ENCODE measurements at regions of chr14 and their contacts with region 1.

Region 1: DNA sequence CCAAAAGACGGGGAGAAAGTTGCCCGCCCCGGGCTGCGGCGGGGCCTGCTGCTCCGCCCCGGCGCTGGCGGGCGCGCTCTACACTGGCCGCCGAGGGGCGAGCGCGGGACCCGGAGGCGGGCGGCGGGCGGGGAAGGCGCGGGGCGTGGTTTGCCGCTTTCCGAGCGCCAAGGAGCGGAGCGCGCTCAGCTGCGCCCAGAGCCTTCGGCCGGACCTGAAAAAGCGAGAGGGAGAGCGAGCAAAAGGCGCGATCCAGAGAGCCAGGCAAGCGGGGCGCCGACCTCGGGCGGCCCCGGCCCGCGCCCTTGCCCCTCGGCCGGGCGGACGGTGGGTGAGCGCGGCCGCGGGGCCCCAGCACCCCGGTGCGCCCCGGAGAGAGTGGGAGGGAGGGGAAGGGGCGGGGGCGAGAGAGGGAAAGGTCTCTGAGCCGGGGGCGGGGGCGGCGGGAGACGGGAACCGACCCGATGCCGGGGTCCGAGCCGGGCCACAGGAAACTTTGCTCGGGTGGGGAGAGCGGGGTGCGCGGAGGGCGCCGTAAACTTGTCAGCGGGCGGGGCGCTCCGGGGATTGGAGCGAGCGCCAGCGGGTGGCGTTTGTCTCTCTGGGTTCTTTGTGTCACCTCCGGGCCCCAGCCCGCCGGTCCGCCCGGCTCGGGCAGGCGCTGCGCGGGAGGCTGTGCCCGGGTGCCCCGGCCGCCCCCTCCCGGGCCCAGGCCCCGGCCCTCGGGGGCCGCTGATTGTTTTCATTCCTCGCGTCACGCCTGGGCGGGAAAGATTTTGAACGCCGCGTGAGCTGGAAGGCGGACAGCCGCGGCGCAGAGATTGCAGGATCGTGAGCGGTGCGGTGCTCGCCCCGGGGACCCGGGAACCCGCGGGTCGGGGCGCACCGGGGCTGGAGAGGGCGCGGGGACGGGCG is at the start of gene SYNE2:
- DNase-seq: peak; percentile 84
- H3K4me3 Mint-ChIP-seq: peak within 1 kb of the TSS; percentile 93
- H3K27ac Mint-ChIP-seq: peak within 1 kb of the TSS; percentile 87
- H3K4me1 Mint-ChIP-seq: peaks cover 38% of the 10 kb centered on the region
- H3K27me3 Mint-ChIP-seq: no peaks in the 10 kb centered on the region
- total RNA-seq, gene SYNE2: 22.1 to 22.3 TPM

Region 2: DNA sequence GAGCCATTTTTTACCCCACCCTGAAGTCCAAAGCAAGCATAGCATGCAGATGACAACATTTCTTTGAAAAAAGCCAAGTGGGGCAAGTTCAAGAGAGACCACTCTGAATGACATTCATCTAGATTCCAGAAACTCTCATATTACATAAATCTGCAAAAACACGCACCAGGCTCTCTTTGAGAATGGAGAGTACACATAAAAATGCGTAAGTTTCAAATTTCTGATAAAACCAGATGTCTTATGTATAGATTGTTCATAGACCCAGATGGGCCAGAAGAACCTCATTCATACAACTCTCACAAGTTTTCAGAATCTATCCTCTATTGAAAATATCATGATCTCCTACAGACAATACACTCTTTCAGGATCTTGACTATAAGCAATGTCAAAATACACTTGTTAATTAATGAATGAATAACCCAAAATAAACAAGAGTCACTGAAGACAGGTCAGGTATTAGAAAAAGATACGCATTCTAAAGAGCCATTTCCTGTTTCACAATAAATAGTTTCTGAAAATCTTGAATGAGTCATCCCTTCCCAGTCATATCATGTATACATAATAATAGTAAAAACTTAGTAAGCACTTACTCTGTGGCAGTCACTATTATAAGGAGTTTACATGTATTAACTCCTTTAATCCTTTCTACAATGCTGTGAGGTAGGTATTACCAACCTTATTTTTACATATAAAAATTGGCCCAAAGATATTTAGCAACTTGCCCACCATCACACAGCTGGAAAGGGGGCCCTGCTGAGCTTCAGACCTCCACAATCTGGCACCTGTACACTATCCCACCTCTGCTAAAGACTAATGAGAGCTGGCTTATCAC is 381.9 kb before region 1 on chr14:
- CTCF ChIA-PET with region 1: no interaction called
- intact Hi-C with region 1: loop called (anchors 5 kb)
- DNase-seq: no peak
- H3K4me3 Mint-ChIP-seq: no peak overlapping the region
- H3K27ac Mint-ChIP-seq: no peak overlapping the region
- H3K4me1 Mint-ChIP-seq: peaks cover 60% of the 10 kb centered on the region
- H3K27me3 Mint-ChIP-seq: no peaks in the 10 kb centered on the region

Region 3: DNA sequence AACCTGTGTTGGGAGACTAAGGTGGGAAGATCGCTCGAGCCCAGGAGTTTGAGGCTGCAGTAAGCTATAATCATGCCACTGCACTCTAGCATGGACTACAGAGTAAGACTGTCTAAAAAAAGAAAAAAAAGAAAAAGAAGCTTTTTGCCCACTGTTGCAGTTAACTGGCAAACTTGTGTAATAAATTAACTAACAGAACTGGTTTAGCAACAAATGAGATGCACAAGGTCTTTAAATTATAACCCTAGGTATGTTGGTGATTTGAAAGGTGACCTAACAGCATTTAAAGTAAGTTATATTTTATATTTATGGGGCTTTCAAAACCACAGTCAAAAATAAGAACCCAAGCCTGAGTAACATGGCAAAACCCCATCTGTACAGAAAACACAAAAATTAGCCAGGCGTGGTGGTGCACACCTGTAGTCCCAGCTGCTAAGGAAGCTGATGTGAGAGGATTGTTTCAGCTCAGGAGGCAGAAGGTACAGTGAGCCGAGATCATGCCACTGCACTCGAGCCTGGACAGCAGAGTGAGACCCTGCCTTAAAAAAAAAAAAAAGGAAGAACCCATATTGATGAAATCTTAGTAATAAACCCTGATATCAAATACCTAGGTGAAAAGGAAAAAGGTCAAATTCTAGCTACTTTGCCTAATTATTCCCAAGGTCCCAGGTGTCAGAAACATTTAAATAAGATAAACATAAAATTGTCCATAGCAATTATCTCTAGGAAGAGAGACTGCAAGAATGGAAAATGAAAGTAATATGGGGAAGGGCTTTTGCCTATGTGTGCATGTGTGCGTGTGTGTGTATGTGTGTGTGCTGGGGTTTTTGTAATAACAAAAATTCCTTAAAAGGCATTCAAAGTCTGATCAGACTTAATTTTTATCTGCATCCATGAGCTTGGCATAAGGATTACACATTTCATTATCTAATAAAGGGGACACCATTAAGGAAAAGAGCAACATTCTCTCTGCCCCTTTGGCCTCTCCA is 15.2 kb after region 1 on chr14:
- CTCF ChIA-PET with region 1: interaction called, 7 read pairs
- intact Hi-C with region 1: loop called (anchors 1 kb)
- DNase-seq: peak; percentile 34
- H3K4me3 Mint-ChIP-seq: no peak overlapping the region
- H3K27ac Mint-ChIP-seq: no peak overlapping the region
- H3K4me1 Mint-ChIP-seq: peaks cover 63% of the 10 kb centered on the region
- H3K27me3 Mint-ChIP-seq: no peaks in the 10 kb centered on the region

Region 4: GRCh38 chr14:63993992-63994391 is 140.9 kb after region 1 on chr14:
- CTCF ChIA-PET with region 1: no interaction called
- intact Hi-C with region 1: loop called (anchors 1 kb)
- DNase-seq: peak; percentile 15
- H3K4me3 Mint-ChIP-seq: no peak overlapping the region
- H3K27ac Mint-ChIP-seq: no peak overlapping the region
- H3K4me1 Mint-ChIP-seq: no peaks in the 10 kb centered on the region
- H3K27me3 Mint-ChIP-seq: no peaks in the 10 kb centered on the region

Region 5: GRCh38 chr14:64338616-64339316 is 485.7 kb after region 1 on chr14:
- CTCF ChIA-PET with region 1: no interaction called
- intact Hi-C with region 1: loop called (anchors 2 kb)
- DNase-seq: peak; percentile 95
- H3K4me3 Mint-ChIP-seq: peak overlapping the region; percentile 92
- H3K27ac Mint-ChIP-seq: peak overlapping the region; percentile 86
- H3K4me1 Mint-ChIP-seq: peaks cover 19% of the 10 kb centered on the region
- H3K27me3 Mint-ChIP-seq: no peaks in the 10 kb centered on the region

Region 6: DNA sequence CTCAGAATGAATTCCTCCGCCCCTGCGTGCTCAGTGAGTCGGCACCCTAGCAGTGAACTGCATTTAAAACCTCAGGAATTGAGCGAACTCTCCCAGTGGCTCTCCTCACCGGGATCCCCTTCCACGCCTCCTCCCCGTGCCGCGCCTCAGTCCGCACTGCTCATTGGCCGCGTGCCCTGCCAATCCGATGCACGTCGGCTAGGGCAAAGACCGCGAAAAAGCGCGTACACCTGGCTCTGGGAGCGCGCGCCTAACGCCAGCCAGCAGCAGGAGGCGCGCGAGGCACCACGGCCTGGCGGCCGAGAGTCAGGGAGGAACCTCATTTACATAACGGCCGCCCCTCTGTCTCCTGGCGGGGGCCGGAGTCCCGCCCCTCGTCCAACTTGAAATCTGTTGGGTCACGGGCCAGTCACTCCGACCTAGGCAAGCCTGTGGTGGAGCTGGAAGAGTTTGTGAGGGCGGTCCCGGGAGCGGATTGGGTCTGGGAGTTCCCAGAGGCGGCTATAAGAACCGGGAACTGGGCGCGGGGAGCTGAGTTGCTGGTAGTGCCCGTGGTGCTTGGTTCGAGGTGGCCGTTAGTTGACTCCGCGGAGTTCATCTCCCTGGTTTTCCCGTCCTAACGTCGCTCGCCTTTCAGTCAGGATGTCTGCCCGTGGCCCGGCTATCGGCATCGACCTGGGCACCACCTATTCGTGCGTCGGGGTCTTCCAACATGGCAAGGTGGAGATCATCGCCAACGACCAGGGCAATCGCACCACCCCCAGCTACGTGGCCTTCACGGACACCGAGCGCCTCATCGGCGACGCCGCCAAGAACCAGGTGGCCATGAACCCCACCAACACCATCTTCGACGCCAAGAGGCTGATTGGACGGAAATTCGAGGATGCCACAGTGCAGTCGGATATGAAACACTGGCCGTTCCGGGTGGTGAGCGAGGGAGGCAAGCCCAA is 687.4 kb after region 1 on chr14 and contains the start of gene HSPA2:
- CTCF ChIA-PET with region 1: no interaction called
- intact Hi-C with region 1: loop called (anchors 10 kb)
- DNase-seq: peak; percentile 97
- H3K4me3 Mint-ChIP-seq: peak within 1 kb of the TSS; percentile 92
- H3K27ac Mint-ChIP-seq: peak within 1 kb of the TSS; percentile 83
- H3K4me1 Mint-ChIP-seq: peaks cover 30% of the 10 kb centered on the region
- H3K27me3 Mint-ChIP-seq: peaks cover 22% of the 10 kb centered on the region
- total RNA-seq, gene HSPA2: 4.1 to 5.1 TPM